ENCODE measurements at regions of chr10 and their contacts with region 1.

Region 1: DNA sequence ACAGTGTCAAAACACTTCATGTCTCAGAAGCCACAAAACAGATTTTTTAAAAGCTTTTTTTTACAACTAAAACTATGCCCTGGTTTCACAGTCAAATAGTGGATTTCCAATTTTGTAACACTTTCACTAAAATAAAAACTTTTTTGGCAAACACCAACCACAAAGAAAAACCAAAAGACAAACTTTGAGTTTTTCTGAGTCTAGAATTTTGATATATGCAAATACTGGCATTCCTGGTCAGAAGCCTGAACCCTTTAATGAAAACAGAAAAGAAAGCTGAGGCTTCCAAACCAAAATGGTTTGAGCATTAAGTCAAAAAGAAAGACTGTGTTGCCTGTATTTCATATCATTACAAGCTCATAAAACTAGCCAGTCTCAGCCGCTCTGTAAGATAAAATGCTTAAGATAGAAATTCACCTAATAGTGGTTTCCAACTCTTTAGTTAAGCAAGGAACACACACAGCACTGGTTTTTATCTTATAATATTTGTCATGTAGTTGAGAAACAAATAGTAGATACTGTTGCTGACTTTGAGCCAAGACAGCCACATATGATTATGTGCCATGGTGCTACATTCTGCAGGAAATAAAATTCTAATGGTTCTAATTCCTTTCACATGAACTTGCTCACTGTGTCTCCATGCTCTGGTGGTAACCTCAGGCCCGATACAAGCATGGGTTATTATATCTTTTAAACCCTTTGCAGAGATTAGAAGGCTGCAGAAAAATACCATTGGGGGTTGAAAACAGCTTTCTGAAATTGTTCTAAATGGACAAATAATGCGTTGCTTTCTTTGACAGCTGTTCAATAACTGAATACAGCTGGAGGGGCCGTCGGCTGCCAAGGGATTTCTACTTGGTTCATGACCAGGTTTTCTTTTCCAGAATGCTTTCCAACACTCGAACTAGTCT is 49.4 kb downstream of the FAM171A1 start:
- DNase-seq: no peak
- ATAC-seq: no peak
- H3K4me3 ChIP-seq: no peak overlapping the region
- H3K27ac ChIP-seq: no peak overlapping the region
- H3K4me1 ChIP-seq: no peaks in the 10 kb centered on the region
- H3K27me3 ChIP-seq: no peaks in the 10 kb centered on the region
- CTCF ChIP-seq: no peak
- EP300 ChIP-seq: no peak
- POLR2A ChIP-seq: no peak
- RAD21 ChIP-seq: no peak

Region 2: GRCh38 chr10:15333909-15334649 is 12.4 kb after region 1 on chr10:
- CTCF ChIA-PET with region 1: interaction called, 3 read pairs
- POLR2A ChIA-PET with region 1: no interaction called
- RAD21 ChIA-PET with region 1: no interaction called
- SMC1A ChIA-PET with region 1: no interaction called
- in situ Hi-C with region 1: no loop called
- intact Hi-C with region 1: loop called (anchors 1 kb)
- DNase-seq: no peak
- ATAC-seq: no peak
- H3K4me3 ChIP-seq: no peak overlapping the region
- H3K27ac ChIP-seq: no peak overlapping the region
- H3K4me1 ChIP-seq: no peaks in the 10 kb centered on the region
- H3K27me3 ChIP-seq: no peaks in the 10 kb centered on the region
- CTCF ChIP-seq: no peak
- EP300 ChIP-seq: no peak
- POLR2A ChIP-seq: no peak
- RAD21 ChIP-seq: no peak